PC-9 (cell line): ENCODE measurements at regions of chr10 and their contacts with region 1.

Region 1: GRCh38 chr10:88401671-88402347 is 181.3 kb downstream of the RNLS start:
- DNase-seq: no peak
- H3K4me3 ChIP-seq: no peak overlapping the region
- H3K27ac ChIP-seq: no peak overlapping the region
- H3K4me1 ChIP-seq: no peaks in the 10 kb centered on the region
- H3K27me3 ChIP-seq: no peaks in the 10 kb centered on the region
- CTCF ChIP-seq: peak; percentile 36; the same call in 1 of the 2 replicates

Region 2: DNA sequence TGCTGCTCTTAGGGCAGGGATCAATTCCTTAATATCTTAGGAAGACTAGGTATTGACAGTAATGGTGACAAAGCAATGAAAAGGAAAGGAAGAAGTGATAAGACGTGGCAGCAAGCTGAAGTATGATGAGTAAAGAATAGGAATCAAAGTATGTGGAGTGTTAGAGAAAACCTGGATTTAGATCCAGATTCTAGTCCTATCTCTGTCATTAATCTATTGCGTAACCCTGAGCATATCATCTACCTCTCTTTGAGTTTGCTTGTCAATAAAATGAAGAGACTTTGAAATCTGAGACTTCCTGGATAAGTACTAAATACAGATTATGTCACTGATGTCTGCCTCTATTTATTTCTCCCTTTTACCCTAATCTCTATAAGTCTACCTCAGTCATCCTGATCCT is 449.2 kb before region 1 on chr10:
- CTCF ChIA-PET with region 1: no interaction called
- POLR2A ChIA-PET with region 1: interaction called, 18 read pairs
- intact Hi-C with region 1: no loop called
- DNase-seq: no peak
- H3K4me3 ChIP-seq: no peak overlapping the region
- H3K27ac ChIP-seq: no peak overlapping the region
- H3K4me1 ChIP-seq: peaks cover 18% of the 10 kb centered on the region
- H3K27me3 ChIP-seq: no peaks in the 10 kb centered on the region
- CTCF ChIP-seq: no peak

Region 3: GRCh38 chr10:88004451-88004850 is 397.4 kb before region 1 on chr10:
- CTCF ChIA-PET with region 1: no interaction called
- POLR2A ChIA-PET with region 1: no interaction called
- intact Hi-C with region 1: no loop called
- DNase-seq: no peak
- H3K4me3 ChIP-seq: no peak overlapping the region
- H3K27ac ChIP-seq: no peak overlapping the region
- H3K4me1 ChIP-seq: peaks cover 8% of the 10 kb centered on the region
- H3K27me3 ChIP-seq: no peaks in the 10 kb centered on the region
- CTCF ChIP-seq: no peak

Region 4: DNA sequence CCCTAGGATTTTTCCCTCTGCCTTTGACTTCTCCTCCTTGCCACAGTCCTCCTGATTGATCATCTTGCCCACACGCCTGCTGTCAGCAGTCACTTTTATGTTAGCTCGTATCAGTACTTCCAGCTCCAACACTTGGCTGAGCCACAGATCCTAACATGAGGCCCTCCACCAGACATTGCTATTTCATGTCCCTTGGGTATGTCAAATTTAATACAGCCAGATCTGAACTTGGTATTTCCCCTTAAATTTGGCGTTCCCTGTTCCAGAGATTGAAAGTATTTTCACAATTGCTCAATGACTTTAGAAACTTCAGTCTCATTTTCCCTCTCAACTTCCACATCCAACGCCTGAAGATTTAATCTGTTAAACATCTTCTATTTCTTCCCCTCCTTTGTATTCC is 40.9 kb after region 1 on chr10:
- CTCF ChIA-PET with region 1: no interaction called
- POLR2A ChIA-PET with region 1: no interaction called
- intact Hi-C with region 1: no loop called
- DNase-seq: no peak
- H3K4me3 ChIP-seq: no peak overlapping the region
- H3K27ac ChIP-seq: no peak overlapping the region
- H3K4me1 ChIP-seq: no peaks in the 10 kb centered on the region
- H3K27me3 ChIP-seq: no peaks in the 10 kb centered on the region
- CTCF ChIP-seq: no peak